ENCODE measurements at regions of chr11 and their contacts with region 1.

Region 1: GRCh38 chr11:575996-576768 is at the start of gene PHRF1:
- DNase-seq: peak; percentile 98
- ATAC-seq: peak; percentile 89
- H3K4me3 Mint-ChIP-seq: peak within 1 kb of the TSS; percentile 86
- H3K27ac Mint-ChIP-seq: peak within 1 kb of the TSS; percentile 98
- H3K4me1 Mint-ChIP-seq: peaks cover 49% of the 10 kb centered on the region
- H3K27me3 Mint-ChIP-seq: peaks cover 10% of the 10 kb centered on the region
- total RNA-seq, gene PHRF1: 40.0 to 44.5 TPM

Region 2: GRCh38 chr11:199782-200181 is 376.4 kb before region 1 on chr11:
- CTCF ChIA-PET with region 1: no interaction called
- POLR2A ChIA-PET with region 1: no interaction called
- intact Hi-C with region 1: no loop called
- DNase-seq: peak; percentile 8
- ATAC-seq: no peak
- H3K4me3 Mint-ChIP-seq: no peak overlapping the region
- H3K27ac Mint-ChIP-seq: no peak overlapping the region
- H3K4me1 Mint-ChIP-seq: peaks cover 40% of the 10 kb centered on the region
- H3K27me3 Mint-ChIP-seq: no peaks in the 10 kb centered on the region

Region 3: GRCh38 chr11:269146-269890 is 306.9 kb before region 1 on chr11:
- CTCF ChIA-PET with region 1: no interaction called
- POLR2A ChIA-PET with region 1: no interaction called
- intact Hi-C with region 1: loop called in 1 of 2 experiments (anchors 5 kb)
- DNase-seq: peak; percentile 72
- ATAC-seq: peak; percentile 71
- H3K4me3 Mint-ChIP-seq: peak overlapping the region; percentile 79
- H3K27ac Mint-ChIP-seq: peak overlapping the region; percentile 99
- H3K4me1 Mint-ChIP-seq: peaks cover 43% of the 10 kb centered on the region
- H3K27me3 Mint-ChIP-seq: no peaks in the 10 kb centered on the region

Region 4: DNA sequence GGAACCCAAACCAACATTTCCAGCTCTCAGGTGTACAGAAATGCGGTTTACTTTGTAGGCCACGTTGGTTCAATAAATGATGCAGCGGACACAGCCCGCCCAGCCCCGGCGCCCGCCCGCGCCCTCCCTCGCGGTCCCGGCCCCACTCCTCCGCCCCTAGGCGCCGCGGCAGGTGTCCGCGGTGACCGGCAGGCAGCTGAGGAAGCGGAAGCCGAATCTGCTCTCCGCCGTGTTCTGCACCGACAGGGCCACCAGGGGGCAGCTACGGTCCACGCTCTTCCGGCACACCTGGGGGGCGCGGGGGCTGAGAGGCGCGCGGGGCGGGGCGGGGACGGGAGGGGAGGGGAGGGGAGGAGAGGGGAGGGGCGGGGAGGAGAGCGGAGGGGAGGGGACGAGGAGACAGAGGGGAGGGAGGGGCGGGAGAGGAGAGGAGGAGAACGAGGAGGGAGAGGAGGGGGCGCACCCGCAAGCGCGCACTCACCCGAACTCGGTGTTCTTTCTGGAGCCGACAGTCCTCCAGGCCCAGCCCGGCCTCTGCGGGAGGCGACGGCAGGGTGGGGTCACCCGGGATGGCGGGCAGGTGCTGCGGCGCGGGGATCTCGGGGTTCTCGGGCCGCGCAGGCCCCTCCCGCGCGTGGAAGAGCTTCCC is 21.2 kb before region 1 on chr11:
- CTCF ChIA-PET with region 1: interaction called, 6 read pairs
- POLR2A ChIA-PET with region 1: interaction called, 4 read pairs
- intact Hi-C with region 1: loop called (anchors 1 to 2 kb)
- DNase-seq: peak; percentile 87
- ATAC-seq: peak; percentile 85
- H3K4me3 Mint-ChIP-seq: no peak overlapping the region
- H3K27ac Mint-ChIP-seq: no peak overlapping the region
- H3K4me1 Mint-ChIP-seq: peaks cover 3% of the 10 kb centered on the region
- H3K27me3 Mint-ChIP-seq: peaks cover 2% of the 10 kb centered on the region

Region 5: DNA sequence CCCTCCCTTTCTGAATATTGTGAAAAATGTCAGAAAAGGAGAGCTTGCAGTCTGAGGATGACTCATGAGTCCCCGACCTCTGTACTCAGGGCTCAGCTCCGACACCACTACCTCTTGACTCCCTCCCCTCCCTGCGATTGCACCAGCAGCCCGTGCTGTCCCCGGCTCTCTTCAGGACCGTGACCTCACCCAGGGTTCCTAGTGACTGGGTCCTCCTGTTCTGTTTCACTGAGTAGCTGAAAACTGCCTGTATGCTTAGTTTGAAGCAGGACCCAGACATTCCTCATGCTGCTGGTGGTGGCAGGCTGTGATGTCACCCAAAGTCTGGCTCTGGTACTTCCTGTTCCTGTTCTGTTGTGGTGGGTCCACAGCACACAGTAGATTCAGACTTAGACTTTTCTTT is 11.8 kb after region 1 on chr11:
- CTCF ChIA-PET with region 1: interaction called, 4 read pairs
- POLR2A ChIA-PET with region 1: interaction called, 10 read pairs
- intact Hi-C with region 1: loop called in 1 of 2 experiments (anchors 1 kb)
- DNase-seq: peak; percentile 87
- ATAC-seq: peak; percentile 99
- H3K4me3 Mint-ChIP-seq: peak overlapping the region; percentile 64
- H3K27ac Mint-ChIP-seq: peak overlapping the region; percentile 98
- H3K4me1 Mint-ChIP-seq: peaks cover 21% of the 10 kb centered on the region
- H3K27me3 Mint-ChIP-seq: no peaks in the 10 kb centered on the region

Region 6: DNA sequence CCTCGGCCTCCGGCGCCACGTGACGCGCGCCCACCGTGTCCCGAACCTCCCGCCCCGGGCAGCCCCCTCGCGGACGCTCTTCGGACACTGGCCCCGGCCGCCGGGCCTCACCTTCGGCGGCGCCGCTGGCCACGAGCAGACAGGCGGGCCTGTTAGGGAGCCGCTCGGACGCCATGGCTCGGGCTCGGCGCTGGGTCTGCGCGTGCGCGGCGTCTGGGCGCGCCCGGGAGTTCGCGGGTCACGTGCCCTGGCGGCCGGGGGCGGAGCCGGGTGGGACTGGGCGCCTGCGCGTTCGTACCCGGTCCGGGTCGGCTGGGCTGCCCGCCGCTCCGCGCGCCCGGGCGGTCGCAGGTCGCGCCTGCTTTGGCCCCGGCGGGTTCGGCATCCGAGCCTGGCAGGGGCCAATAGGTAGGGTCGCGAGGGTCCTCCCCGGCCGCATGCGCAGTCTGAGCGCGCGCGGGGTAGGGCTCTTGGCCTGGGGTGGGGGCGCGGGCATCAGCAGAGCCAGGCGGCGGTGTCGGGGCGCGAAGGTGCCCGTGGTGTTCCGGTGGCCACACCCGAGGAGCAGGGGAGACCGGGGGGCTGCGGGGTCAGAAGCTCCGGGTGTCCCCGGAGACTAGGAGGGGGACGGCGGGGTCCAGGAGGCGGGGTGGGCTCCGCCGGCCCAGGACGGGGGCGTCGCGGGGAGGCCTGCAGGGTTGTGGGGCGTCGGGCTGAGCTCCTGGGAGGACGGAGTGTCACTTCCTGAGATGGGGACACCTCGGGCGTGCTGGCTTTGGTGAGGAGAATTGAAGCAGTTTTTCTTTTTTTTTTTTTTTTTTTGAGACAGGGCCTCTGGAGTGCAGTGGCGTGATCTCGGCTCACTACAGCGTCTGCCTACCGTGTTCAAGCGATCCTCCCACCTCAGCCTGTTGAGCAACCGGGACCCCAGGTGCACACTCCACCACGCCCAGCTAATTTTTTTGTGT is 201.4 kb after region 1 on chr11 and contains the start of gene GATD1:
- CTCF ChIA-PET with region 1: no interaction called
- POLR2A ChIA-PET with region 1: no interaction called
- intact Hi-C with region 1: loop called in 1 of 2 experiments (anchors 1 kb)
- DNase-seq: peak; percentile 97
- ATAC-seq: peak; percentile 91
- H3K4me3 Mint-ChIP-seq: peak within 1 kb of the TSS; percentile 89
- H3K27ac Mint-ChIP-seq: peak within 1 kb of the TSS; percentile 82
- H3K4me1 Mint-ChIP-seq: peaks cover 20% of the 10 kb centered on the region
- H3K27me3 Mint-ChIP-seq: no peaks in the 10 kb centered on the region
- total RNA-seq, gene GATD1: 45.7 to 59.8 TPM

Region 7: DNA sequence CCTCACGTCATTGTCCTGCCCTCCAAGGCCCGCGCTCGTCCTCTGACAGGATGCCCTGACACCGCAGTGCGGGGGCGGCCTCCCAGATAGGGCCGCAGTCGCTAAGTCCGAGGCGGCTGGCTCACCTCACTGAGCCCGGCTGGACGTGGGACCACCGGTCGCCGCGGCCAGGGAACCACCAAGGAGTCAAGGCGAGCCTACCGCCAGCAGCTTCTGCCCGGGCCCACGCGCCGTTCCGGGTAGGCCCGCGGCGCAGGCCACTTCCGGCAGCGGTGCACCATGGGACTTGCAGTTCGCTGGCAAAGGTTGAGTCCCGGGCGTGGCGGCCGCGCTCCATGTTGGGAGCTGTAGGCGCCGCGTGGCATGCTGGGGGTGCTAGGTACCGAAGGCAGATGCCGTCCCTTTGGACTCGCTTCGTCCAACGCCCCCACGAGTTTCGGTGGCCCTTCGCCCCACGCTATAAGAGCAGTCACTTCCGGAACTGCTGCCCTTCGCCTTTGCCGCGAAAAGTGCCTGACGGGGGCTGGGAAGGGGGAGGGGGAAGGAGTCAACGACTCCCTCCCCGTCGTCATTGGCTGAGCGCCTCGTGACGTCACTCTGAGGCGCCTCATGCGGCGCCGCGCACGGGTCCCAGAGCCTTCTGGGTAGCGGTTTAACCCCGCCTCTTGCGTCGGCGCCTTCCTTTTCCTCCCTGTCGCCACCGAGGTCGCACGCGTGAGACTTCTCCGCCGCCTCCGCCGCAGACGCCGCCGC is 233.3 kb after region 1 on chr11 and contains the start of gene RPLP2:
- CTCF ChIA-PET with region 1: interaction called, 5 read pairs
- POLR2A ChIA-PET with region 1: no interaction called
- intact Hi-C with region 1: loop called in 1 of 2 experiments (anchors 1 kb)
- DNase-seq: peak; percentile 99
- ATAC-seq: peak; percentile 86
- H3K4me3 Mint-ChIP-seq: peak within 1 kb of the TSS; percentile 94
- H3K27ac Mint-ChIP-seq: peak within 1 kb of the TSS; percentile 97
- H3K4me1 Mint-ChIP-seq: peaks cover 30% of the 10 kb centered on the region
- H3K27me3 Mint-ChIP-seq: no peaks in the 10 kb centered on the region
- total RNA-seq, gene RPLP2: 2,132 to 3,230 TPM

Measured in activated CD4-positive, alpha-beta T cell treated with anti-CD3 and anti-CD28 coated beads for 36 hours (primary cell).